ENCODE measurements at regions of chr15 and their contacts with region 1.

Region 1: DNA sequence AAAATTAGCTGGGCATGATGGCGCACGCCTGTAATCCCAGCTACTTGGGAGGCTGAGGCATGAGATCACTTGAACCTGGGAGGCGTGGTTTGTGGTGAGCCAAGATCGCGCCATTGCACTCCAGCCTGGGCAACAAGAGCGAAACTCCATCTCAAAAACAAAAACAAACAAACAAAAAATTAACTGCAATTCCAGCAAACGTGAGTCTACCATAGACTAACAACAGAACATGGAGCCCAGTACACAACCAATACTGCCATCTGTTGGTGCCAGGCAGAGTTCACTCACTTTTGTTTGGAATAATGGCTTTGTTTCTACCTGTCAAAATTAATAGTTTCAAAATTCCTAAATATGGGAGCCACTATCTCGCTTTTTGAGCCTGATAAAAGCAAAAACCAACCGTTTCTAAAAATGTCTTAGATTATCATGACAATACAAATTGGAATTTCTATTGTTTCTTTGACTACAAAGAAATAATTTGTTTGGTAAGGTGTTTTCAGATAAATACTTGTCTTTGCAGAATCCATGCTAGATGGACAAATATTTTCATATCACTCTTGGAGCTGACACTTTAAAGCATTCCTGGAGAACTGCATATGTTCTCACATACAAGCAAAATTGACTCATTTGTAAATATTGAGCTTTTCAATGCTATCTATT is 45.0 kb downstream of the GPR176 start:
- DNase-seq: no peak
- ATAC-seq: no peak
- H3K4me3 ChIP-seq: no peak overlapping the region
- H3K27ac ChIP-seq: no peak overlapping the region
- H3K4me1 ChIP-seq: peaks cover 0 to 5% (median 0%) of the 10 kb centered on the region in 12 donors
- H3K27me3 ChIP-seq: no peaks in the 10 kb centered on the region
- CTCF ChIP-seq: peak; percentile 34 to 67 (median 52)
- POLR2A ChIP-seq: no peak

Region 2: DNA sequence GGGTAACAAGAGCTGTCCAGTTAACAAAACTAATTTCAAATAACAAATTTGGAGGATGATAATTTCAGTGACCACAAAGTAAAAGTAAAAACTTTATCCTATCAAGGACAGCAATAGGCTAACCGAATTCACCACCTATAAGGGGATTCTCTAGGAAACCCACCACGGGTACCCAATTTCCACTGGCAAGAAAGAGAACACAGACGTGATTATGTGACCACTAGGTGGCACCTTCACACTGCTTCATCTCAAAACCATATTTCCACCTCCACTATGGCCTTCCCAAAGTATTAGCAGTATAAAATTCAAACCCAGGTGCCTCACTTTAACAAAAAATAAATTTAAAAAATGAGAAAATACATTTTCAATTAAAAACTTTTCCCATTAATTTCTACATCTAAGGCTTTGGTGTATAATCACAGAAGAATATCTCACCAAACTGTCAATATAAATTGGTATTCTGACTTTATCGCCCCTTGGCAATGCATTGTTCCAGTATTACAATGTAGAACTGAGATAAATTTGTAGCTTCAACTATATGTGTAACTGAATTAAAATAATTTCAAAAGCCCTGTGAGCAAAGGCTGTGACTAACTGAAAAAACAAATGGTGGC is 188.9 kb before region 1 on chr15:
- intact Hi-C with region 1: loop called in 6 of 10 experiments (anchors 5 to 10 kb)
- DNase-seq: peak in 2 of 5 donors; percentile 21 to 31
- ATAC-seq: peak in 3 of 4 donors; percentile 48 to 76 (median 64)
- H3K4me3 ChIP-seq: no peak overlapping the region
- H3K27ac ChIP-seq: no peak overlapping the region
- H3K4me1 ChIP-seq: peaks cover 0 to 6% (median 0%) of the 10 kb centered on the region in 12 donors
- H3K27me3 ChIP-seq: no peaks in the 10 kb centered on the region
- CTCF ChIP-seq: peak; percentile 69 to 86 (median 76)
- POLR2A ChIP-seq: no peak

Region 3: DNA sequence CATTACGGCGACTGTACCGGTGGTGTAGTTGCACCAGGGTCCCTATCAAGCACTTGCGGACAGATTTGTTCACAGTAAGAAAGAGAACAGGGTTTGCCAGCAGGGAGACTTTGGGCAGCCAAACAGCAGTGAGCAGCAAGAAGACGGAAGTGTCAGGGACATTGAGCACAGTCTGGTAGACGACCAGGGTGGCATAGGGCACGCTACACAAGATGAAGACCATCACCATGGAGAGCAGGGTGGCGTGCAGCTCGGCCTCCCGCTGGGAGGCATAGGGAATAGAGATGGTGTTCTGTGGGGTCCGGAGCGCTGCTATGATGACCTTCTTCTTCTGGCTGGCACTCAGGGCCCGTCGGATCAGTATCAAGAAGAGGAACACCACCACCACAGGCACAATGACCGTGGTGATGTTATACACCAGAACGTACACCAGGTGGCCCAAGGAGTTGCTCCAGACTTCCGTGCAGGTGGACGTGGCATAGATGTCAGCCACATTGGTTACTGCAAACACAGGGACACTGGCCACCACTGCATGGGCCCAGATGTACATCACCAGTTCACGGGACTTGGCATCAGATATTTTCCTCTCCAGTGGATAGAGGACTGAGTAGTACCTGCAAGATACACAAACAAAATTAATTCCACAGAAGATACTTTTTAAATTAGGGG is 73.2 kb before region 1 on chr15:
- intact Hi-C with region 1: loop called in 3 of 10 experiments (anchors 5 to 10 kb)
- DNase-seq: no peak
- ATAC-seq: peak in 1 of 4 donors; percentile 28
- H3K4me3 ChIP-seq: no peak overlapping the region
- H3K27ac ChIP-seq: no peak overlapping the region
- H3K4me1 ChIP-seq: peaks cover 0 to 8% (median 0%) of the 10 kb centered on the region in 12 donors
- H3K27me3 ChIP-seq: peaks cover 0 to 4% (median 0%) of the 10 kb centered on the region in 9 donors
- CTCF ChIP-seq: peak in 4 of 12 donors; percentile 10 to 27 (median 19)
- POLR2A ChIP-seq: no peak

Measured in heart left ventricle (tissue), 16 donors.